ENCODE measurements at regions of chr2 and their contacts with region 1.

Region 1: GRCh38 chr2:71545572-71546274 is 92.4 kb downstream of the DYSF start:
- DNase-seq: peak; percentile 64
- ATAC-seq: peak; percentile 83

Region 2: GRCh38 chr2:69957965-69958364 is 1587.8 kb before region 1 on chr2:
- intact Hi-C with region 1: loop called (anchors 5 kb)
- DNase-seq: no peak
- ATAC-seq: no peak

Region 3: GRCh38 chr2:71491551-71492511 is 53.9 kb before region 1 on chr2:
- intact Hi-C with region 1: no loop called
- DNase-seq: peak; percentile 32
- ATAC-seq: peak; percentile 46

Region 4: DNA sequence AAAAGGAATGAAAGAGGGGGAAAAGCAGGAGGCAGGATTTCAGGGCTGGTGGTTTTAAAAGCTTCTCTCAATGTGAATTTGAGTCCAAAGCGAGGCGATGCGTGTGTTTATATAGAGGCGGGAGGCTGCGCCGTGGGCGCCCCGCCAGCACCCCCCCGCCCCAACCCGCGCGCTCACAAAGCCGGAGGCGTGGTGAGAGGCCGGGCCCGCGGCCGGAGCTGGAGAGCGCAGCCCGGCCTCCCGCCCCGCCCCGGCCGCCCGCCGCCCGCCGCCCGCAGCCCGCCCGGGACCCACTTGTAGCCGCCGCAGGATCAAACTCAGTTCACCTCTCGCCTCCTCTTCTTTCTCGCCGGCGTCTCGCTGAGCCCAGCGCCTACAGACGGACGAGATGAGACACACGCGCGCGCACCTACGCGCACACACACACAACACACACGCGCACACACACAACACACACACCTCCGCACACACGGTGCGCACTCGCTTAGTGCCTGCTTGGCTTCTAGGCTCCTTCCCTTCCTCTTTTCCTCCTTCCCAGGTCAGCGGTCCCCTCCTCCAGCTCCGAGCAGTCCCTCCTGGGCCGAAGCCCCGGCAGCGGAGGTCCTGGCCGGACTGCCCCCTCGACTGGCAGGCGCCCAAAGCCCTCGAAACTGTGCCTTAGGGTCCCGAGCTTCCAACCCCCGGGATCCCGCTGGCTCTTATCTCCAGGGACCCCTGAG is 603.3 kb after region 1 on chr2:
- intact Hi-C with region 1: loop called (anchors 5 kb)
- DNase-seq: peak; percentile 67
- ATAC-seq: peak; percentile 22

Region 5: GRCh38 chr2:72731116-72731515 is 1185.4 kb after region 1 on chr2:
- intact Hi-C with region 1: no loop called
- DNase-seq: no peak
- ATAC-seq: no peak

Measured in sciatic nerve (tissue), 2 donors.